Activated B cell treated with CpG ODN at 0.5 μM for 24 hours (primary cell): ENCODE measurements at regions of chr17 and their contacts with region 1.

Region 1: DNA sequence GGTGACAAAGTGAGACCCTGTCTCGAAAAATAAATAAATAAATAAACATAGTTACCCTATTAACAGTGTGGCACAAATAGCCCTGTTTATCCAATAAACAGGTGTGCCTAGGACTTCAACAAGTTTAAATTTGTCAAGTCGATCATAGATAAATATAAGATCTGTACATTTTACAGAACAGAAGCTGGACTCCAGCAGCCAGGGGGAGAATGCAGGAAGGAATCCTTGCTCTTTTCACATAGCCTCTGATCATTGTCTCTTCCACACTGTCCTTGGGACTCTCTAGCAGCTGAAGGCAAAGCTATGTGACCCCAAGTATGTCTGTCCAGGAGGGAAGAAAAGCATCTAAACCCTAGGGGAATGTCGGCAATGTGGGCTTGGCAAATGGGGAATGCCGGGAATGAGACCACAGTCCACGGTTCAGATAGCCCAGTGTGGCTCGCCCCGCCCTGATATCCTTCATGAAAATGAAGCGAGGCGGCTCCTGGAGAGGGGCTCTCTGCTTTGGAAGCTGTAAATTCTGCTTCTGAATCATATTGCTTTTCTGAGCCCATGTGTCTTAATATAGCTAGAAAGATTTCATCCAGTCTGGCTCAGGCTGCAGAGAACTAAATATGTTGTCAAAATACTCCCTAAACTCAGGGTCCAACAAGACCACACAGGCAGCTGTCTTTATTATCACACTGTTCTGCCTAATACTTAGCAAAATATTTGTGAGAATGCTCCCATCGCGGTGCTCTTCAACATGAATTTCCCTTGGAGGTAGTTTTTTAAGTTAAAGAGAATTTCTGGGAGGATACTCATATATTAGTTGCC is 24.9 kb upstream of the GRB2 start:
- DNase-seq: no peak
- ATAC-seq: no peak
- H3K4me3 Mint-ChIP-seq: no peak overlapping the region
- H3K27ac Mint-ChIP-seq: no peak overlapping the region
- H3K4me1 Mint-ChIP-seq: peaks cover 10% of the 10 kb centered on the region
- H3K27me3 Mint-ChIP-seq: peaks cover 9% of the 10 kb centered on the region
- CTCF ChIP-seq: no peak

Region 2: GRCh38 chr17:75504347-75504964 is 74.1 kb after region 1 on chr17:
- CTCF ChIA-PET with region 1: no interaction called
- POLR2A ChIA-PET with region 1: no interaction called
- intact Hi-C with region 1: loop called (anchors 1 kb)
- DNase-seq: peak; percentile 41
- ATAC-seq: peak; percentile 91
- H3K4me3 Mint-ChIP-seq: no peak overlapping the region
- H3K27ac Mint-ChIP-seq: no peak overlapping the region
- H3K4me1 Mint-ChIP-seq: peaks cover 2% of the 10 kb centered on the region
- H3K27me3 Mint-ChIP-seq: no peaks in the 10 kb centered on the region
- CTCF ChIP-seq: no peak

Region 3: GRCh38 chr17:75738218-75738802 is 307.9 kb after region 1 on chr17:
- CTCF ChIA-PET with region 1: no interaction called
- POLR2A ChIA-PET with region 1: no interaction called
- intact Hi-C with region 1: no loop called
- DNase-seq: no peak
- ATAC-seq: no peak
- H3K4me3 Mint-ChIP-seq: no peak overlapping the region
- H3K27ac Mint-ChIP-seq: peak overlapping the region; percentile 6
- H3K4me1 Mint-ChIP-seq: peaks cover 12% of the 10 kb centered on the region
- H3K27me3 Mint-ChIP-seq: no peaks in the 10 kb centered on the region
- CTCF ChIP-seq: no peak